Breast epithelium (tissue), 4 donors: ENCODE measurements at regions of chr5 and their contacts with region 1.

Region 1: GRCh38 chr5:147188200-147189108 is 46.4 kb upstream of the STK32A start:
- DNase-seq: no peak
- H3K4me3 ChIP-seq: peak overlapping the region in 2 of 3 donors; percentile 15 to 20
- H3K27ac ChIP-seq: no peak overlapping the region
- H3K4me1 ChIP-seq: no peaks in the 10 kb centered on the region
- H3K27me3 ChIP-seq: no peaks in the 10 kb centered on the region
- CTCF ChIP-seq: peak; percentile 67 to 89 (median 83)
- POLR2A ChIP-seq: no peak

Region 2: DNA sequence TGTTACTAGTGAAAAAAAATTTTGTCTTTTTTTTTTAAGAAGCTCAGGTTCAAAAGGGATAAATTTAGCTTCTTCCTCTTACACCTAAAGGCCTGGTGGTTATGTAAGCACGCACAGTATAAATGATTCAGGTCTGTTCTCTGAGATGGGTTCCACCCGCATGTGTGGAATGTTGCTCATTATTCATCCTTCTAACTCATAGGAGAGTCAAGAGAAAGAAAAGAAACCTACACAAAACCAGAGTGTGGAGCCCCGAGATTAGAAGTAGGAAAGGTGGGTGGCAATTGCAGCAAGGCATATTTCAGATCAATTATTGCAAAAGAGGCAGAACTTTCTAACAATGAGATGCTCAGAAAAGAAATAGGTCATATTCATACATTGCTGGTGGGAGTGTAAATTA is 1096.6 kb before region 1 on chr5:
- intact Hi-C with region 1: loop called (anchors 5 kb)
- DNase-seq: no peak
- H3K4me3 ChIP-seq: no peak overlapping the region
- H3K27ac ChIP-seq: no peak overlapping the region
- H3K4me1 ChIP-seq: no peaks in the 10 kb centered on the region
- H3K27me3 ChIP-seq: no peaks in the 10 kb centered on the region
- CTCF ChIP-seq: no peak
- POLR2A ChIP-seq: no peak

Region 3: GRCh38 chr5:146993876-146994530 is 194.5 kb before region 1 on chr5:
- intact Hi-C with region 1: loop called (anchors 10 kb)
- DNase-seq: no peak
- H3K4me3 ChIP-seq: no peak overlapping the region
- H3K27ac ChIP-seq: no peak overlapping the region
- H3K4me1 ChIP-seq: no peaks in the 10 kb centered on the region
- H3K27me3 ChIP-seq: no peaks in the 10 kb centered on the region
- CTCF ChIP-seq: no peak
- POLR2A ChIP-seq: no peak

Region 4: DNA sequence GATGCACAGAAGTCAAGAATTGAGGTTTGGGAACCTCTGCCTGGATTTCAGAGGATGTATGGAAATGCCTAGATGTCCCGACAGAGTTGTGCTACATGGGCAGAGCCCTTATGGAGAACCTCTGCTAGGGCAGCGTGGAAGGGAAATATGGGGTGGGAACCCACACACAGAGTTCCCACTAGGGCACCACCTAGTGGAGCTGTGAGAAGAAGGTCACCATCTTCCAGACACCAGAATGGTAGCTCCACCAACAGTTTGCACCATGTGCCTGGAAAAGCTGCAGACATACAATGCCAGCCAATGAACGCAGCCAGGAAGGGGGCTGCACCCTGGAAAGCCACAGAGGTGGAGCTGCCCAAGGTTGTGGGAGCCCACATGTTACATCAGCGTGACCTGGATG is 150.9 kb after region 1 on chr5:
- intact Hi-C with region 1: no loop called
- DNase-seq: no peak
- H3K4me3 ChIP-seq: no peak overlapping the region
- H3K27ac ChIP-seq: no peak overlapping the region
- H3K4me1 ChIP-seq: no peaks in the 10 kb centered on the region
- H3K27me3 ChIP-seq: no peaks in the 10 kb centered on the region
- CTCF ChIP-seq: no peak
- POLR2A ChIP-seq: no peak